Kidney (tissue), 22 donors: ENCODE measurements at regions of chr10 and their contacts with region 1.

Region 1: DNA sequence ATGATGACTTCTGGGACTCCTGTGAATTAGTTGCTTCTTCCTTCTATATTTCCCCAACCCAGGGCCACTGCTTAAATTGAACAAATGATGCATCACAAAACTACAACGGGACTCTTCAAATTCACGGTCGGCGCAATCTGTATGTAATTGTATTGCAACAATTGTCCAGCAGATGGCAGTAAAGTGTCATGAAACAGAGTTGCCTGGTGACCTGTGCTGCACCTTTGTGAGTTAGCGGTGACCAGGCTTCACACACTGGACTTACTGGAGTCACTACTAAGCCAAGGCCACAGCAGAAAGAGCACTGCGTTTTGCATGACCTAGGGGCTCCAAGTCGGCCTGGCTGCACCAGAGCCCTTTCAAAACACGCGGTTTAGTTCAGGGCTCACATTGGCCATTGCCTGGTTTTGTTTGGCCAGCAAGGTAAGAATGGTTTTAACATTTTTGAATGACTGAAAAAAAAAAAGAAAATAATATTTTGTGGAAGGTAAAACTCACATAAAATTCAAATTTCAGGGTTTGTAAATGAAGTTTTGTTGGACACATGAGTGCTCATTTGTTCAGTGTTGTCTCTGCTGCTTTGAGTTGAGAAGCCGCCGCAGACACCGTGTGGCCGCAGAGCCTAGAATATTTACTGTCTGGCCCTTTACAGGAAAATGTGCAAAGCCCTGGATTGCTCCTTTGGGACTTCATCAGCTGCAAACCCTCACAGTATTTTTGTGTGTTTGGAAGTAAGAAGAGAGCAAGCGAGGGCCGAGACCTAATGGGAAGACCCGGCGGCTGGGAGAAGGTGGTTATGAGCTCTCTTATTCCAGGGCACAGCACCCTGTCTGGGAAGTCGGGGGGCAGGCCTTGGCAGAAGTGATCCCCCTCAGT is 23.2 kb upstream of the ZNF32 start:
- DNase-seq: peak; percentile 75 to 89 (median 79)
- H3K4me3 ChIP-seq: no peak overlapping the region
- H3K27ac ChIP-seq: no peak overlapping the region
- H3K4me1 ChIP-seq: peaks cover 0 to 3% (median 0%) of the 10 kb centered on the region in 3 donors
- H3K27me3 ChIP-seq: no peaks in the 10 kb centered on the region
- CTCF ChIP-seq: peak; percentile 90

Region 2: DNA sequence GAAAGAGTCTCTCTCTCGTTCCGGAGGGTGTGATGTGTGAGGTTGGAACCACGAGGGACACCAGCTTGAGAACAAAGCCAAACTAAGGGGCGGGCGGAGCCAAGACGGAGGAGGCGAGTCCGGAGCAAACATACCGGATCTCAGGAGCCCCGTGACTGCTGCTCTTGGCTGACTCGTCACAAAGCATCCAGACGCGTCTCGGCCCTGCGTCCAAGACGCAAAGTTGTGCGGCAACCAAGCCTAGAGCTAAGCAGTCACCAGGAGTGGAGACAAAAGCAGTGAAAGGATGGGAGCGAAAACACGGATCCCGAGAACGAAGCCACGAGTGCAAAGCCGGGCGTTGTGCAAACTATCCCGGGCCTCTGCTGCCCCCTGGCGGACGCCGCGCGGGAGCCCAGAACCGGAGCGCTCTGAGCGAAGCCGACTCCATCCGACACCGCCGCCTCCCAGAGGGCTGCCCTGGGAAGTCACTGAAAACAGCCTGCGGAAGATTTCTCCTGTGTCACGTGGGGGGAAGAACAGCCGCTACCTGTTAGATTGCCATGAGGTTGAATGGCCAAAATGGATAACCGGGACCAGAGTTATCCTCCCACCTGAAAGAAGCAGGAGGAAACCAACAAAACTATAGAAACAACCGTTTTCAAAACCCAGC is 1192.9 kb after region 1 on chr10:
- intact Hi-C with region 1: loop called (anchors 10 kb)
- DNase-seq: peak; percentile 94 to 96 (median 96)
- H3K4me3 ChIP-seq: peak overlapping the region; percentile 52 to 87 (median 77)
- H3K27ac ChIP-seq: peak overlapping the region; percentile 40 to 52
- H3K4me1 ChIP-seq: peaks cover 0 to 9% (median 7%) of the 10 kb centered on the region in 3 donors
- H3K27me3 ChIP-seq: no peaks in the 10 kb centered on the region
- CTCF ChIP-seq: peak; percentile 92